Naive thymus-derived CD4-positive, alpha-beta T cell (primary cell): ENCODE measurements at regions of chr7 and their contacts with region 1.

Region 1: DNA sequence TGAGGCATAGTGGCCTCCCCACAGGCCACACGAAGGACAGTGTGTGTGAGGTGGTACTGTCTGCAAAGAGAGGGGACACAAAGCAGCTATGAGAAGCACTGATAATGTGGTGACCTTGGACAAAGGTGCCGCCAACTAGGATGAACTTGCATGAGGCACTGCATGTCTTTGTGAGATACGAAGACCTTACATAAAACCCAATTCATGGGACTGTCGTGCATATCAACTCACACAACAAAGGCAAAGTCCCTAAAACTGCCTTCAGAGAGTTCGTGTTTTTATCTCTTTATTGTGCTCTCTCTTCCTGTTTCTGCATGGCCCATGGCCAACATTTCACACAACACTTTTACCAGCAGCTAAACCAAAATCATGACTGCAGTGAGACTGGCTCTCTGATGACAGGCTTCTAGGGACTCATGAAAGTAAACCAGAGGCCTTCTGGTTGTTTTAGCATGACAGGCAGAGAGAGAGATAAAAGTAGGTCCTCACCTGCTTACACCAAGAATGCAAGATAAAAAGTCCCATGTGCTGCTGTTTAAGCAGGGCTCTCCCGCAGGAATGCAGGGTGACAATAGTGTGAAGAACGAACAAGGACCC is 347.8 kb downstream of the ELMO1 start:
- DNase-seq: peak in 5 of 9 donors; percentile 20 to 56 (median 35)
- ATAC-seq: peak; percentile 38
- H3K4me3 ChIP-seq: no peak overlapping the region
- H3K4me3 Mint-ChIP-seq: peak overlapping the region in 8 of 10 donors; percentile 13 to 67 (median 32)
- H3K27ac ChIP-seq: no peak overlapping the region
- H3K27ac Mint-ChIP-seq: peak overlapping the region in 8 of 9 donors; percentile 20 to 91 (median 71)
- H3K4me1 ChIP-seq: peaks cover 0 to 24% of the 10 kb centered on the region in 2 donors
- H3K4me1 Mint-ChIP-seq: peaks cover 24 to 58% (median 52%) of the 10 kb centered on the region in 7 donors
- H3K27me3 ChIP-seq: no peaks in the 10 kb centered on the region
- H3K27me3 Mint-ChIP-seq: no peaks in the 10 kb centered on the region

Region 2: DNA sequence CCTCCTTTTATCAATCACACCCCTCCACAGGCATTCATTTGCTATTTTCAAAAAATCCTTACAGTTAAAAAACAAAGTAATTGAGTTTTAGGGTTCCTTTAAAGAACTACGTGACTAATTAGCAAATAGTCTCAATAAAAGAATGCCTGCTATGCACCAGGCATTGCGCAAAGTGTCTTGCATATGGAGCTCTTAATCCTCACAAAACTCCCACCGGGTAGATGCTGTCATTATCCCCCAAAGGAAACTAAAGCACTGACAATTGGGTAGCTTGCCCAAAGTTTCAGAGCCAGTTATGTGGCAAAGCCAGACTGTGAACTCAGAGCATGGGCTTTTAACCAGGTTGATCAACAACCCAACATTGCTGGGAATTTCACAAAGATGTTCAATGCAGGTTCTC is 42.1 kb after region 1 on chr7:
- CTCF ChIA-PET with region 1: no interaction called
- POLR2A ChIA-PET with region 1: no interaction called
- intact Hi-C with region 1: loop called in 1 of 2 experiments (anchors 1 kb)
- DNase-seq: no peak
- ATAC-seq: no peak
- H3K4me3 ChIP-seq: no peak overlapping the region
- H3K4me3 Mint-ChIP-seq: no peak overlapping the region
- H3K27ac ChIP-seq: no peak overlapping the region
- H3K27ac Mint-ChIP-seq: no peak overlapping the region
- H3K4me1 ChIP-seq: no peaks in the 10 kb centered on the region
- H3K4me1 Mint-ChIP-seq: peaks cover 0 to 30% (median 15%) of the 10 kb centered on the region in 7 donors
- H3K27me3 ChIP-seq: no peaks in the 10 kb centered on the region
- H3K27me3 Mint-ChIP-seq: no peaks in the 10 kb centered on the region